ENCODE measurements at regions of chr6 and their contacts with region 1.

Region 1: DNA sequence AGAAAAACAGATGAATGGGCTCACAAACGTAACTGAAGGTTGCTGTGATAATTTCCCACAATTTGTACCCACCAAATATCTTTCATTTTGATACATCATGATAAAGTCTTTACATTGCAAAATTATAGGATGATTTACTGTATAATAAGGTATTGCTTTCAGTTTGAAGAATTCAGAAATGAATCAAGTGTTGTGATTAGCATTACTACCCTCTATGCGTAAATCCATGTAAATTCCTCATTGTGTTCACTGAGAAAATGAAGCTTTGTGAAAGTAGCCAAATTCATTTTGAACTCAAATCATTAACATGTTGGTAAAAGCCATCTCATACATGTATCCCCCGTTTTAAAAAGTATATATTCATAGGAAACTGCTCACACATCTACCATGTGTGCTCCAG is 379.4 kb downstream of the ESR1 start:
- DNase-seq: no peak
- H3K4me3 ChIP-seq: no peak overlapping the region
- H3K27ac ChIP-seq: no peak overlapping the region
- H3K4me1 ChIP-seq: peaks cover 0 to 3% (median 0%) of the 10 kb centered on the region in 4 donors
- H3K27me3 ChIP-seq: no peaks in the 10 kb centered on the region
- CTCF ChIP-seq: no peak

Region 2: DNA sequence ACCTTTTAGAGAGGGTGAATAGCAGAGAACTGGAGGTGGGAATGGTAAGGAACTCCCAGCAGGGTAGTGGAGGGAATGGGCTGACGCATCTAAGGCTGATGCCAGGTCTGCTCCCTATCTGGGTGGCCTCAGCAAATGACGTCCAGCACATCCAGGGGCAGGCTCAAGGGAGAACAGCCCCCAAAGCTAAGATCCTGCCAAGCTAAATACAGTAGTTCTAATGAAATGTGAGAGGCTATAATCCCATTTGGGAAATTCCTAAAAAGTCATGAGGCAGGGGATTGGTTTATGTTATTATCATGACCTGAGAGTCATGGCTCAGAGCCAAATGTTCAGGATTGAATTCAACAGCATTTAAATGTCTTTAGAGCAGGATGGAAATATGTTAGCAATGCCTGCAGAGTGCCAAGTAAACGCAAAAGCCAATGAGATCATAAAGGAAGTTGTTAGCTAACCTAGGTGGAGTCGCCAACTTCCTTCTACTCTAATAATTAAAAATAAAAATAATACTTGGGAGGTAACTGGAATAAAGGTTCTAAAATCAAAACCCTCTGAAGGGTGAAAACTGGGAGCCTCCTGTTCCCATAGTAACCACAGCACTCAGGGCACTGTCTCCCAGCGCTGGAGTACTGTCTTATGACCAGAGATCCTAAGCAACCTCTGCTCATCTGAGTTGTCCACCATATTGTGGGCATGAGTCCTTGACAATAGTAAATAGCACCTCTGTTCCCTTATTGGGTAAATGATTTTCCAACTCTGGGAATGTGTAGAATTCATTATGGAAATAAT is 1783.2 kb before region 1 on chr6:
- intact Hi-C with region 1: no loop called
- DNase-seq: peak; percentile 35 to 85
- H3K4me3 ChIP-seq: no peak overlapping the region
- H3K27ac ChIP-seq: no peak overlapping the region
- H3K4me1 ChIP-seq: peaks cover 0 to 14% (median 9%) of the 10 kb centered on the region in 4 donors
- H3K27me3 ChIP-seq: no peaks in the 10 kb centered on the region
- CTCF ChIP-seq: no peak

Region 3: GRCh38 chr6:152117156-152118133 is 69.4 kb before region 1 on chr6:
- intact Hi-C with region 1: no loop called
- DNase-seq: no peak
- H3K4me3 ChIP-seq: no peak overlapping the region
- H3K27ac ChIP-seq: peak overlapping the region in 1 of 2 donors; percentile 25
- H3K4me1 ChIP-seq: peaks cover 0 to 33% (median 10%) of the 10 kb centered on the region in 4 donors
- H3K27me3 ChIP-seq: no peaks in the 10 kb centered on the region
- CTCF ChIP-seq: no peak

Region 4: DNA sequence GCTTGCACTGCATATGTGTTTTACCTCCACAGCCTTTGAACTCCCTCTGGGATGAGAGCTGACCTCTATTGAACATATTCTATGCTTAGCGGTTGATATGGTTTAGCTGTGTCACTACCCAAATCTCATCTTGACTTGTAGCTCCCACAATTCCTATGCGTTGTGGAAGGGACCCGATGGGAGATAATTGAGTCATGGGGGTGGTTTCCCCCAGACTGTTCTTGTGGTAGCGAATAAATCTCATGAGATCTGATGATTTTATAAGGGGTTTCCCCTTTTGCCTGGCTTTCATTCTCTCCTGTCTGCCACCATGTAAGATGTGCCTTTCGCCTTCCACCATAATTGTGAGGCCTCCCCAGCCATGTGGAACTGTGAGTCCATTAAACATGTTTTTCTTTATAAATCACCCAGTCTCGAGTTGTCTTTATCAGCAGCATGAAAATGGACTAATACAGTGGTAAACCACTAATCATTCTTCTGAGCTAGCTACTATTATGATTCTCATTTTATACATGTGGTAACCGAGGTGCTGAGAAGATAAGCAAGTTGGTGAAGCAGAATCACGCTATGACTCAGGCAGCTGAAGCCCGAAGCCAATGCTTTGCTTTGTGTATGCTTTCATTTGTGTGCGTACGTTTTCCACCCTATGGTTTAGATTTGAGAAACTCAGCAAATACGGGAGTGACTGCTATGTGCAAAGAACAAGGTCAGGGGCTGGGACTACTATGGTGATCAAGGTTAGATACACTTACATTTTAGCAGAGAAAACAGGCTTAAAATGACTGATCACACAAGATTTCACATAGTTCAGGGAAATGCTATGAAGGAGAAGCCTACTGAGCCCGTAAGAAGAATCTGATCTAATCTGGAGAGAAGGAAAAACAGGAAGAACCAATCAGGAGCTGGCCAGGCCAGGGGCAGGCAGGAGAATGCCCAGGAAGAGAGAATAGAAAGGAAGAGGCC is 15.9 kb before region 1 on chr6:
- intact Hi-C with region 1: loop called (anchors 2 kb)
- DNase-seq: no peak
- H3K4me3 ChIP-seq: no peak overlapping the region
- H3K27ac ChIP-seq: peak overlapping the region; percentile 8 to 31
- H3K4me1 ChIP-seq: peaks cover 0 to 21% (median 12%) of the 10 kb centered on the region in 4 donors
- H3K27me3 ChIP-seq: no peaks in the 10 kb centered on the region
- CTCF ChIP-seq: no peak

Region 5: GRCh38 chr6:152206072-152206818 is 19.4 kb after region 1 on chr6:
- intact Hi-C with region 1: no loop called
- DNase-seq: no peak
- H3K4me3 ChIP-seq: no peak overlapping the region
- H3K27ac ChIP-seq: peak overlapping the region in 1 of 2 donors; percentile 2
- H3K4me1 ChIP-seq: peaks cover 0 to 17% (median 0%) of the 10 kb centered on the region in 4 donors
- H3K27me3 ChIP-seq: no peaks in the 10 kb centered on the region
- CTCF ChIP-seq: peak; percentile 34